Activated CD4-positive, alpha-beta T cell treated with anti-CD3 and anti-CD28 coated beads, Interleukin-2, amount 10 ng/mL, durations not matched to agents 24 days and 14 days (primary cell): ENCODE measurements at regions of chr19 and their contacts with region 1.

Region 1: GRCh38 chr19:6199240-6199983 is 63.9 kb downstream of the ACSBG2 start:
- DNase-seq: peak; percentile 99
- H3K4me3 Mint-ChIP-seq: peak overlapping the region; percentile 100
- H3K27ac Mint-ChIP-seq: peak overlapping the region; percentile 95
- H3K4me1 Mint-ChIP-seq: peaks cover 18% of the 10 kb centered on the region
- H3K27me3 Mint-ChIP-seq: peaks cover 10% of the 10 kb centered on the region

Region 2: GRCh38 chr19:6161271-6161850 is 38.1 kb before region 1 on chr19:
- intact Hi-C with region 1: loop called (anchors 1 kb)
- DNase-seq: peak; percentile 88
- H3K4me3 Mint-ChIP-seq: peak overlapping the region; percentile 6
- H3K27ac Mint-ChIP-seq: peak overlapping the region; percentile 25
- H3K4me1 Mint-ChIP-seq: peaks cover 5% of the 10 kb centered on the region
- H3K27me3 Mint-ChIP-seq: peaks cover 3% of the 10 kb centered on the region